ENCODE measurements at regions of chr1 and their contacts with region 1.

Region 1: DNA sequence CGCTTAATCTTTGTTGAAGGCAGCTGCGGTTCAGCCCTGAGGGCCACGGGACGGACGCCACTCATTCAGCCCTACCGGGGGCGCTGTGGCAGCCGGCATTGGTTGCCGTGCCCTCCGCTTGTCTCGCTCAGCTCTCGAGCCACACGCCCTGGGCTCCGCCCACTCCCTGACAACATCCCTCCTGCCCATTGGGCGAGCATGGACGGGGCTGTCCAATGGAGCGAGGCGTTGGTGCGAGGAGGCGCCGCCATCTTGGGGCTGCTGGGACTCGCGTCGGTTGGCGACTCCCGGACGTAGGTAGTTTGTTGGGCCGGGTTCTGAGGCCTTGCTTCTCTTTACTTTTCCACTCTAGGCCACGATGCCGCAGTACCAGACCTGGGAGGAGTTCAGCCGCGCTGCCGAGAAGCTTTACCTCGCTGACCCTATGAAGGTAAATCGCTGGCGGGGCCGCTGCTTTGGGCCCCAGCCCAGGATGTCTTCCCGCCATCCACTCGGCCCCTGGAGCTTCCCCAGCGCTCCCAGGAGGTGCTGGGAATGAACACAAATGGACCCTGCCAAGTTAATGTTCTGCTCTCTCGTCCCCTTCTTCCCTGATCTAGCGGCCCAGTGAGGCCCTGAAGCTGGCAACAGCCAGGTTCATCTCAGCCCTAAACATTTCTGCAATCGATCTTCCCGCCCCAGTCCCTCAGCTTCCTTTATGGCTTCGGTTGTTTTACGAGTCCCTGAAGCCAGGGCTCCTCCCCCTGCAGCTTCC is at the start of gene SRP9:
- DNase-seq: peak; percentile 99
- ATAC-seq: peak; percentile 100
- H3K4me3 ChIP-seq: peak within 1 kb of the TSS; percentile 61 to 97 (median 71)
- H3K27ac ChIP-seq: peak within 1 kb of the TSS; percentile 61 to 97 (median 94)
- H3K4me1 ChIP-seq: peaks cover 6 to 66% (median 55%) of the 10 kb centered on the region in 9 donors
- H3K27me3 ChIP-seq: no peaks in the 10 kb centered on the region
- CTCF ChIP-seq: peak; percentile 85 to 98 (median 92)
- total RNA-seq, gene SRP9: 165 to 199 (median 175) TPM

Region 2: GRCh38 chr1:225508538-225509375 is 269.0 kb before region 1 on chr1:
- intact Hi-C with region 1: loop called in 1 of 10 experiments (anchors 10 kb)
- DNase-seq: peak in 1 of 2 donors; percentile 66
- ATAC-seq: peak; percentile 94 to 100 (median 98)
- H3K4me3 ChIP-seq: no peak overlapping the region
- H3K27ac ChIP-seq: peak overlapping the region; percentile 2 to 88 (median 76)
- H3K4me1 ChIP-seq: peaks cover 0 to 36% (median 18%) of the 10 kb centered on the region in 9 donors
- H3K27me3 ChIP-seq: no peaks in the 10 kb centered on the region
- CTCF ChIP-seq: no peak

Region 3: GRCh38 chr1:225809842-225810578 is 32.2 kb after region 1 on chr1 and contains the start of gene EPHX1:
- intact Hi-C with region 1: loop called in 6 of 10 experiments (anchors 2 to 5 kb)
- DNase-seq: peak; percentile 91 to 93
- ATAC-seq: peak; percentile 81 to 92 (median 88)
- H3K4me3 ChIP-seq: peak within 1 kb of the TSS; percentile 33 to 95 (median 77)
- H3K27ac ChIP-seq: peak within 1 kb of the TSS; percentile 75 to 97 (median 88)
- H3K4me1 ChIP-seq: peaks cover 16 to 52% (median 45%) of the 10 kb centered on the region in 9 donors
- H3K27me3 ChIP-seq: no peaks in the 10 kb centered on the region
- CTCF ChIP-seq: peak; percentile 16 to 58 (median 39)
- total RNA-seq, gene EPHX1: 34.9 to 80.8 (median 48.4) TPM

Region 4: GRCh38 chr1:225851805-225852204 is 74.0 kb after region 1 on chr1:
- intact Hi-C with region 1: loop called in 9 of 10 experiments (anchors 5 to 10 kb)
- DNase-seq: no peak
- ATAC-seq: no peak
- H3K4me3 ChIP-seq: no peak overlapping the region
- H3K27ac ChIP-seq: no peak overlapping the region
- H3K4me1 ChIP-seq: peaks cover 0 to 43% (median 8%) of the 10 kb centered on the region in 9 donors
- H3K27me3 ChIP-seq: no peaks in the 10 kb centered on the region
- CTCF ChIP-seq: no peak

Region 5: GRCh38 chr1:225977937-225978748 is 200.4 kb after region 1 on chr1:
- intact Hi-C with region 1: loop called in 7 of 10 experiments (anchors 5 to 10 kb)
- DNase-seq: no peak
- ATAC-seq: no peak
- H3K4me3 ChIP-seq: no peak overlapping the region
- H3K27ac ChIP-seq: no peak overlapping the region
- H3K4me1 ChIP-seq: peaks cover 0 to 12% (median 0%) of the 10 kb centered on the region in 9 donors
- H3K27me3 ChIP-seq: no peaks in the 10 kb centered on the region
- CTCF ChIP-seq: no peak

Region 6: GRCh38 chr1:226176870-226177269 is 399.1 kb after region 1 on chr1:
- intact Hi-C with region 1: no loop called
- DNase-seq: no peak
- ATAC-seq: no peak
- H3K4me3 ChIP-seq: no peak overlapping the region
- H3K27ac ChIP-seq: no peak overlapping the region
- H3K4me1 ChIP-seq: peaks cover 3 to 48% (median 26%) of the 10 kb centered on the region in 9 donors
- H3K27me3 ChIP-seq: no peaks in the 10 kb centered on the region
- CTCF ChIP-seq: no peak

Measured in heart right ventricle (tissue), 16 donors.